ENCODE measurements at regions of chr7 and their contacts with region 1.

Region 1: DNA sequence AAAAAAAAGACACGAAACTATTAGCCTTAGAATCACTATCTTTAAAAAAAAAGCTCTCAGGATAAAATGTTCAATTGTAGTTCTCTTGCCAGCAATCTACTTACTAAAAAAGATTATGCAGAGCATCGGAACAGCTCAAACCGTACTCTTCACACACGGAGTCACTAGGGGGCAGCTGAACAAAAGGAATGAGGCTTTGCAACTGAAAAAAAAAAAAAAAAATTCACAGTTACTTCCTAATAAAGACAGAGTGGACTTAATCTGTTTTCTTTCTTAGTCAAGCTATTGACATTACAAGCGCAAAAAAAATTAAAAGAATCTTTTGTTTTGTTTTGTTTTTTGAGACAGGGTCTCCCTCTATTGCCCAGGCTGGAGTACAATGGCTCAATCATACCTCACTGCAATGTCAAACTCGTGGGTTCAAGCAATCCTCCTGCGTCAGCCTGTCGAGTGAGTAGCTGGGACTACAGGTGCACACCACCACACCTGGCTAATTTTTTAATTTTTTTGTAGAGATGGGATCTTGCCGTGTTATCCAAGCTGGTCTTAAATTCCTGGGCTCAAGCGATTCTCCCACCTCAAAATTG is 11.5 kb downstream of the PMS2 start:
- DNase-seq: peak; percentile 71
- H3K4me3 ChIP-seq: no peak overlapping the region
- H3K4me1 ChIP-seq: peaks cover 26% of the 10 kb centered on the region
- H3K27me3 ChIP-seq: no peaks in the 10 kb centered on the region

Region 2: GRCh38 chr7:5872326-5872725 is 125.0 kb before region 1 on chr7:
- in situ Hi-C with region 1: loop called (anchors 25 kb)
- DNase-seq: no peak
- H3K4me3 ChIP-seq: no peak overlapping the region
- H3K4me1 ChIP-seq: no peaks in the 10 kb centered on the region; the same call in 1 of the 2 replicates
- H3K27me3 ChIP-seq: no peaks in the 10 kb centered on the region

Region 3: DNA sequence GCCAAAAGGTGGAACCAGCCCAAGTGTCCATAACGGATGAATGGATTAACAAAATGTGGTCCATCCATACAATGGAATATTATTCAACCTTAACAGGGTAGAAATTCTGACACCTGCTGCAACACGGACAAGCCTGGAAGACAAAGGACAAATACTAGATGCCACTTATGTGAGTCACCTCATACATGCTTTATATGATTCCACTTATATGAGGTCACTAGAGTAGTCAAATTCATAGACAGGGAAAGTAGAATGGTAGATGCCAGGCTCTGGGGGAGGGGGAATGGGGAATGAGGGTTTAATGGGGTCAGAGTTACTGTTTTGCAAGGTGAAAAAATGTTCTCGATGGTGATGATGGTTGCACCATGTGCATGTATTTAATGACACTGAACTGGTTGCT is 309.2 kb after region 1 on chr7:
- in situ Hi-C with region 1: no loop called
- DNase-seq: no peak
- H3K4me3 ChIP-seq: no peak overlapping the region
- H3K4me1 ChIP-seq: peaks cover 3% of the 10 kb centered on the region; the same call in 1 of the 2 replicates
- H3K27me3 ChIP-seq: no peaks in the 10 kb centered on the region

Measured in HAP-1 (cell line).